ENCODE measurements at regions of chr4 and their contacts with region 1.

Region 1: DNA sequence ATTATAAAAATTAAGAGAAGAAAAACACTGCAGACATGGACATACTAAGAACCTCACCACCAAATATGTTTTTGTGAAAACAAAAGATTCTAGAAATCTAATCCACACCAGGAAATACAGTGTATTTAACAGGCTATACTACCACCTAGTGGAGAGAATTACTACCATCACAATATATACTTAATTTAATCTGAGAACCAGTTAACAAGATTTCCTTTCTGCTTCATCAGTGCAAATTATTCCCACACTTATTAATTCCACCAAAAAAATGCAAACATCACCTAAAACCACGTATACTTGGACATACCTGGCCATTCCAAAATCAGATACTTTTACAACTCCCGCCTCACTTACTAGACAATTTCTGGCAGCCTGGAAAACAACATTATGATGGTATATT is 7.0 kb upstream of the TXK start:
- DNase-seq: no peak
- H3K4me3 ChIP-seq: no peak overlapping the region
- H3K27ac ChIP-seq: no peak overlapping the region
- H3K4me1 ChIP-seq: no peaks in the 10 kb centered on the region
- H3K27me3 ChIP-seq: no peaks in the 10 kb centered on the region
- CTCF ChIP-seq: peak in 2 of 3 experiments; percentile 47 to 59

Region 2: GRCh38 chr4:47926639-47927258 is 214.3 kb before region 1 on chr4:
- intact Hi-C with region 1: loop called (anchors 5 kb)
- DNase-seq: no peak
- H3K4me3 ChIP-seq: peak overlapping the region; percentile 2 to 3
- H3K27ac ChIP-seq: no peak overlapping the region
- H3K4me1 ChIP-seq: peaks cover 0 to 4% of the 10 kb centered on the region in 2 donors
- H3K27me3 ChIP-seq: no peaks in the 10 kb centered on the region
- CTCF ChIP-seq: peak; percentile 32 to 73 (median 58)

Region 3: GRCh38 chr4:48002267-48002666 is 138.8 kb before region 1 on chr4:
- intact Hi-C with region 1: loop called (anchors 5 kb)
- DNase-seq: no peak
- H3K4me3 ChIP-seq: no peak overlapping the region
- H3K27ac ChIP-seq: no peak overlapping the region
- H3K4me1 ChIP-seq: no peaks in the 10 kb centered on the region
- H3K27me3 ChIP-seq: no peaks in the 10 kb centered on the region
- CTCF ChIP-seq: no peak

Region 4: DNA sequence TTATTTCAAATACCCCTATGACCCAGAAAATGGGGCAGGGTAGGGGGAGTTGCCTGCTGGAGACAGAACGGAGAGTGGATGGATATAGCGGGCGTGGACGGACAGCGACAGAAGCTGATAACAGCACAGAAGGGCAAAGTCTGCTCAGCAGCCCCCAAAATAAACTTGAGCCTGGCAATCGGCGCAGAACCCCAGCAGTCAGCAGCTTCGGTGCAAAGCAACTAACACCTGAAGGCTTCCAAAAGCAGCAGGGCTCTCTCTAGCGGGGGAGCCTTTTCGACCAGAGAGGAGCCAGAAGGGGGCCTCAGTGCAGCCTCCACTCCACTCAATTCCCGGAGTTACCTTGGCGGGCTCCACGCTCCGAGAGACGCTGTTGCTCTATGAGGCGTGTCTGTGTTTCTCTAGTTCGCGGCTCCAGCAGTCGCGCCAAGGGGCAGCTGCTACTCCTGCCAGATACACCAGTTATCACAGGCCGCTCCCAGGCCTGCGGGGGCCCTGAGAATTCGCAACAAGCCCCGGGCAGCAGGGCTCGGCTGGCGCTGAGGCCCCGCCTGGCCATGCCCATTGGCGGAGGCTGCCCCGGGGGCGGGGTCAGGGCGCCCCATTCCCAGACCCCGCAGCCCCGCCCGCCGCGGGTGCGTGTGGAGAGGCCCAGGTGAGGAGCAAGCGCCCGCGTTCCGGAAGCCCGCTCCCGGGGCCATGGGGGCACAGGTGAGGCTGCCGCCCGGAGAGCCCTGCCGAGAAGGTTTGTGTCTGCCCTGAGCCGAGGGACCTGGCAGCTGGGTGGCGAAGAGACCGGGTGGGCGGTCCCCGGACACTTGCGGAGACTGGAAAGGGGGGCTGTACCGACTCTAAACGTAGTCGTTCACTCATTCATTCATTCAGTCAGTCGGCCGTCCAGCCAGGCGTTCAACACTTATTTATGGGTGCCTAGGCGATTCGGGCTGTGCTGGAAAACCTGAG is 124.6 kb before region 1 on chr4 and contains the starts of genes CNGA1 and NIPAL1:
- intact Hi-C with region 1: loop called (anchors 5 kb)
- DNase-seq: peak in 1 of 2 donors; percentile 85
- H3K4me3 ChIP-seq: peak within 1 kb of the TSS; percentile 61 to 69
- H3K27ac ChIP-seq: peak within 1 kb of the TSS in 1 of 2 donors; percentile 23
- H3K4me1 ChIP-seq: peaks cover 0 to 2% of the 10 kb centered on the region in 2 donors
- H3K27me3 ChIP-seq: no peaks in the 10 kb centered on the region
- CTCF ChIP-seq: peak in 1 of 3 experiments; percentile 31
- total RNA-seq, gene CNGA1: not detected
- total RNA-seq, gene NIPAL1: 2.0 TPM

Region 5: DNA sequence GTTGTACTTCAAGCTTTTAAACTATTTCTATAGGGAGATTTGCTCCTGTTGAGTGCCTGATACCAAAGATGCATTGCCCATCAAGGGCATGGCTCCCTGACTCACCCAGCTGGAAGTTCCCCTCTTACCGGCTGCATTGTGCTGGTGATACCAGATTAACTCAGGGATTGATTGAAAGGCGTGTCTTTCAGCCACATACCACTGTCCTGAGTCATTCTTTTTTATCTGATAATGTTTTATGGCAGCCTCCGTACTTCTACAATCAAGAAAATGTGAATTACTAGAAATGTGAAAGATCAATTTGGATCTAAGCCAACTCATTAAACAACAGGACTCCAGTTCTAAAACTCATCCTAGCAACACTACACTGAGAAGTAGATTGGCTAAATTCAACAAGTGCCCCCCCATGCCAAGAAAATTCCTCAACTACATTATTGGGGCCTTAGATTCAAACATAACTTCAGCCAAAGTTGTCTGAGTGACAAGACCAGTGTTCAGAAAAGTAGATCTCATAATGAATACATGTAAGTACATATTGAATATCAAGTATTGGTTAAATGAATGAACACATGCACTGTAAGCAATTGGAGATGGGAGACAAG is 47.0 kb before region 1 on chr4:
- intact Hi-C with region 1: no loop called
- DNase-seq: no peak
- H3K4me3 ChIP-seq: no peak overlapping the region
- H3K27ac ChIP-seq: no peak overlapping the region
- H3K4me1 ChIP-seq: no peaks in the 10 kb centered on the region
- H3K27me3 ChIP-seq: no peaks in the 10 kb centered on the region
- CTCF ChIP-seq: no peak

Region 6: DNA sequence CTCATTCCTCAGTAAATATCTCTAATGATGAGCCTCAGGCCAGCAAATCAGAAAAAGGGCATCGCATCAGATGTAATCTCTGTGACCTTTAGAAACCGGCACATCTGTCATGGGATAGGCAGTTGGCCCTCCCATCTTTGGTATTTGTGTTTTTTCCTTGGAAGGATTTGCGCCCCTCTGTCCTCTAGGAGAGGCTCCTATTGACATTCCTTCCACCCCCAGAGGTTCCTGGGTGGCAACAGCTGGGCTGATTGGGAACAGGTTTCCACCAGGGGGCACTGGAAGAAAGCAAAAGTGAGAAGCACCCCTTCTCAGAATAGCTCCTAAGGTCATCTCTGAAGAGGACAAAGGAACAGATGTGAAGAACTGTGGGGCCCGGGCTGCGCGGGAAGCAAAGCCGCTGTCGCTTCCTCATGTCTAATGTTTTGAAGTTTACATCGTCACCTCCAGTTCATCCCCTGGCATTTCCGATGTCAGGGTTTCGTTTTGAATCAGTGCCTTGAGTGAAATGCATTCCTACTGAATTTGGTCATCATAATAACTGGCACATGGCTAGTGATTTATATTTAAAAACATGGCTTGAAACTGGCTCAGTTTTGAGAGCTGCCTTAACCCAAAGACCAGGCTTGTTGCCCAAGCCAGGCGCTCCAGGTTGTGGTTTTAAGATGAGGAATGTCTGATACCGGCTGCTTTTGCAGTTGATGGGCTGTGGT is 13.2 kb before region 1 on chr4:
- intact Hi-C with region 1: loop called (anchors 2 kb)
- DNase-seq: peak in 1 of 2 donors; percentile 69
- H3K4me3 ChIP-seq: peak overlapping the region; percentile 3 to 31
- H3K27ac ChIP-seq: peak overlapping the region; percentile 67 to 82
- H3K4me1 ChIP-seq: peaks cover 0 to 12% of the 10 kb centered on the region in 2 donors
- H3K27me3 ChIP-seq: no peaks in the 10 kb centered on the region
- CTCF ChIP-seq: peak; percentile 8 to 53 (median 42)